Testis (tissue), 5 donors: ENCODE measurements at regions of chr1 and their contacts with region 1.

Region 1: DNA sequence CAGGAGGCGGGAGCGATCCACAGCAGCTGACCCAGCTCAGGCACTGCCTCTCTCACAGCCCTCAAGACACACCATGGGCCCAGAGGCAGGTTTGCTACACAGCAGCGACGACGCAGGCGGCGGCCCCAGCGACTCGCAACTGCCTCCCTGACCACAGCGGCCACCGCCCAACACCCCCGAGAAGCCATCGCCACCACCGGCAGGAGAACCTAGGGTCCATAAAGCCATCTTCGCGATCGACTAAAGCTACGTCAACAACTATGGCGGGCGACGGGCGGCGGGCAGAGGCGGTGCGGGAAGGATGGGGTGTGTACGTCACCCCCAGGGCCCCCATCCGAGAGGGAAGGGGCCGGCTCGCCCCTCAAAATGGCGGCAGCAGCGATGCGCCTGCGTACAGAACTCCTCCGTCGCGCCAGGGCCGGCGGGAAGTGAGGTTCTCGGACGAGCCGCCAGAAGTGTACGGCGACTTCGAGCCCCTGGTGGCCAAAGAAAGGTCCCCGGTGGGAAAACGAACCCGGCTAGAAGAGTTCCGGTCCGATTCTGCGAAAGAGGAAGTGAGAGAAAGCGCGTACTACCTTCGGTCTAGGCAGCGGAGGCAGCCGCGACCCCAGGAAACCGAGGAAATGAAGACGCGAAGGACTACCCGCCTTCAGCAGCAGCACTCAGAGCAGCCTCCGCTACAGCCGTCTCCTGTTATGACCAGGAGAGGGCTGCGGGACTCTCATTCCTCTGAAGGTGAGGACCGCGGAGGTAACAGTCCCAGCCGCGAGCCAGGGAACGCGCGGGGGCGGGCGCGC is at the start of gene TOR1AIP1:
- DNase-seq: peak; percentile 96
- H3K4me3 ChIP-seq: peak within 1 kb of the TSS; percentile 81 to 88
- H3K27ac ChIP-seq: peak within 1 kb of the TSS; percentile 95 to 98
- H3K4me1 ChIP-seq: peaks cover 7% of the 10 kb centered on the region
- H3K27me3 ChIP-seq: no peaks in the 10 kb centered on the region
- CTCF ChIP-seq: peak; percentile 36 to 80 (median 79)
- POLR2A ChIP-seq: peak; percentile 54
- total RNA-seq, gene TOR1AIP1: 62.7 to 63.7 TPM

Region 2: GRCh38 chr1:179816196-179816960 is 66.1 kb before region 1 on chr1:
- intact Hi-C with region 1: no loop called
- DNase-seq: peak; percentile 73
- H3K4me3 ChIP-seq: no peak overlapping the region
- H3K27ac ChIP-seq: peak overlapping the region in 1 of 2 donors; percentile 67
- H3K4me1 ChIP-seq: peaks cover 63% of the 10 kb centered on the region
- H3K27me3 ChIP-seq: no peaks in the 10 kb centered on the region
- CTCF ChIP-seq: no peak
- POLR2A ChIP-seq: no peak

Region 3: DNA sequence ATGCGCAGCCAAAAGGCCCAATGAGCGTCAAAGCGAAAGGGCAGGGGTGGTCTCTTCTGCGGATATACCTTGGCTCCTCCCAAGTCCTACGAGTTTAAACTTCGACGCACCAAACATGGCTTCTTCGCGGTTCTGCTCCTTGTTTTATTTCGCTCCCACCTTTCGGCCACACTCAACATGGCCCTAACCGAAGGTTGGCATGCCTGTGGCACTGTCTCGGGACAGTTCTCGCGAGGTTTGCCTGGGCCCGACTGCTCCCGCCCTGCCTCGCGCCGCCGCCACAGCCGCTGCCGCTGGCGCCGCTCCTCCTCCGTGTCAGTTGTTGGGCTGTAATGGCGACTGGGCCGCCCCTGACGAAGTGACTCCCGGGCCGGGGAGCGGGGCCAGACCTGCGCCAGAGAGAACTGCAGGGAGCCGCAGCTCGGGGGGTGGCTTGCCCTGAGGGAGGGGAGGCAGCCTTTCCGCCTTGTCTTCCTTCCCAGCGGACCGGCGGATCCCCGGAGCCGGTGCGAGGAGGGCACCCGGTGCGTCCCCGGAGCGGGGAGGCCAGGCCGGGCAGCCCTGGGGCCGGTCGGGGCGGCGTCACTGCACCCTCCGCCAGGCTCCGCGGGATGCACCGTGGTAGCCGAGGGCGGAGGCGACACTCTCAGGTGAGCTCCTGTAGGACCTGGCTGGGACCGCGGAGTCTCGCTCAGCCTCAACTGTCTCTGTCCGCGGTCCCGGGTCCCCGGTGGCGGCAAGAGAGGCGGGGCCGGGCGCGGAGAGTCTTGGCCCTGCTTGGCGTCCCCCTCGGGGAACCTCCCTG is 72.3 kb after region 1 on chr1 and contains the start of gene CEP350:
- intact Hi-C with region 1: loop called (anchors 10 kb)
- DNase-seq: peak; percentile 98
- H3K4me3 ChIP-seq: peak within 1 kb of the TSS; percentile 88 to 97
- H3K27ac ChIP-seq: peak within 1 kb of the TSS; percentile 92 to 96
- H3K4me1 ChIP-seq: peaks cover 14% of the 10 kb centered on the region
- H3K27me3 ChIP-seq: no peaks in the 10 kb centered on the region
- CTCF ChIP-seq: no peak
- POLR2A ChIP-seq: peak; percentile 40
- total RNA-seq, gene CEP350: 104 to 177 TPM